Posterior vena cava (tissue), 2 donors: ENCODE measurements at regions of chr16 and their contacts with region 1.

Region 1: DNA sequence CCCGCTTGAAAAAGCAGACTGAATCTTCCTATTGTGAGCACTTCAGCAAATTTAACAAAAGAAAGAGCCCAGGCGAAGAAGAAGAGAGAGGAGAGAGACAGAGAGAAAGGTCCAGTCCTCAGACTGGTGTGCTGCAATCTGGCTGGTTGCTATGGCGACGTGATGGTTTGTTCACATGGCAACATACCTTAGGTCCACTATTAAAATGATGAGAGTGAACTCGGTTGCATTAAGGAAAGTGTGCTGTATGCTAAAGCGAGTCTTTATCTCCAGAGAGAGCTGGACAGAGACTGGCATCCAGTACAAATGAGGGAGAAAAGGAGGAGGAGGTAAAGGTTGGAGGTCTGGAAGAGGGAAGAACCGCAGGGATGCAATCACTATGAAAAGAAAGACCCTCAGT is 271.8 kb upstream of the ZFHX3 start:
- DNase-seq: no peak

Region 2: GRCh38 chr16:72111657-72112451 is 1207.9 kb before region 1 on chr16:
- intact Hi-C with region 1: no loop called
- DNase-seq: no peak

Region 3: GRCh38 chr16:73354434-73354833 is 34.7 kb after region 1 on chr16:
- intact Hi-C with region 1: loop called in 1 of 2 experiments (anchors 2 kb)
- DNase-seq: no peak

Region 4: DNA sequence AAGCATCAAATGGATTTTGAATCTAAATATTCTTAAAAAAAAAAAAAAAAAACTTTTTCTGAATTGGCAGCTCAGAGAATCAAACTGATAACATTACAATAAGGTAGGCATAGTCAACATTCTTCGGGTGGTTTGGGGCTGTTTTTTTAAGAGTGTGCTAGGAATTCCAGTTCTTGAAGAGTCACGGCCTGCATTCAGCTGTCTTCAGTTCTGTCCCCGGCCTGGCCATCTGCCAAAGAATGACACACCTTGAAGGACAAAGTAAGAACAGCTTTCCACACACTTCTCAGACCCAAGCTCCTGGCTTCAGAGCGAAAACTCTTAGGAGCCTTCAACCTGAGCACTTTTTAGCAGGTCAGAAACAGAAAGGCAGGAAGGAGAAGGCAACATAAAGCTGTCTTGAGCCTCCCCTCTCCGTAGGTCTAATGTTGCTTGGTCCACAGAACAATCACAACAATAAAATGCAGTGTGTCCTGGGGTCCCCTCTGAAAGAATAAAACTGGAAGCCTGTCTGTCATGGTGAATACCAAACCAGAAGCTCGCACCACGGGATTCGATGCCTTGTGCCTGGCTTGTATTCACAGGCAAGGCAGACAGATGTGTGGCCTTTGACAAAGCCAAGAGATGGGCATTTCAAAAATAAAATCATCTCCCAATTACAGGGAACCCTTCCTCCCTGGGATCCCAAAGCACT is 252.5 kb after region 1 on chr16:
- intact Hi-C with region 1: no loop called
- DNase-seq: no peak